Sigmoid colon (tissue), 7 donors: ENCODE measurements at regions of chr13 and their contacts with region 1.

Region 1: GRCh38 chr13:98549728-98550317 is 27.1 kb downstream of the STK24 start:
- DNase-seq: no peak
- H3K4me3 ChIP-seq: no peak overlapping the region
- H3K27ac ChIP-seq: no peak overlapping the region
- H3K4me1 ChIP-seq: peaks cover 0 to 44% (median 37%) of the 10 kb centered on the region in 4 donors
- H3K27me3 ChIP-seq: no peaks in the 10 kb centered on the region
- CTCF ChIP-seq: no peak
- EP300 ChIP-seq: no peak
- POLR2A ChIP-seq: no peak

Region 2: DNA sequence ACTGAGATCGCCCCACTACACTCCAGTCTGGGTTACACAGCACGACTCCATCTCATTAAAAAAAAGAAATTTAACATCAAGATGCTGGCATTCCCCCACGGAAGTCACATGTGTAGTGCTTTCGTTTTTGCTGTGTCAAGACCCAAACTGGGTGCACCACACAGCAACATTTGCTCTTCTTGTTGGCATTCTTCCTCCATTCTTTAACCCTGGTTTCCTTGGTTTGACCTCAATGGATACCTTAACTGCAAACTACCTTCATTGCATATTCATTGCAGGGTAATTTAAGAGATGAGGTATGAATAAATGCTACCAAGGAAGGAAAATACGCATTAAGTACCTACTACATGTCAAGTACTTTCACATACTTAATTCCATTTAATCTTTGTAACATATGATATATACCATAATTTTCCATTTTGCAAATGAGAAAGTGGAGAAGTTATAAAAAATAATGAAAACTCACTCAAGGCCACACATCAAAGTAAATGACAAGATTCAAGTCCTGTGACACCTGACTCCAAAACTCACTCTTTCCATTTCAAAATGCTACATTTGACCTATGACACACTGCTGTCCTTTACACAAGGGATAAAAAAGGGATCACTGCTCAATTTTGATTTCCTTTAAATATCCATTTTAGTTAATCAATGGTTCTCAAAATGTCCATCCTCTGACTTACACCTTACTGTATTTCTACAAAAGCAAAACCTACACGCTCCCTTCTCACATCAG is 32.1 kb before region 1 on chr13:
- intact Hi-C with region 1: loop called (anchors 5 kb)
- DNase-seq: no peak
- H3K4me3 ChIP-seq: no peak overlapping the region
- H3K27ac ChIP-seq: peak overlapping the region in 3 of 4 donors; percentile 35 to 39 (median 37)
- H3K4me1 ChIP-seq: peaks cover 0 to 64% (median 40%) of the 10 kb centered on the region in 4 donors
- H3K27me3 ChIP-seq: no peaks in the 10 kb centered on the region
- CTCF ChIP-seq: no peak
- EP300 ChIP-seq: no peak
- POLR2A ChIP-seq: no peak

Region 3: DNA sequence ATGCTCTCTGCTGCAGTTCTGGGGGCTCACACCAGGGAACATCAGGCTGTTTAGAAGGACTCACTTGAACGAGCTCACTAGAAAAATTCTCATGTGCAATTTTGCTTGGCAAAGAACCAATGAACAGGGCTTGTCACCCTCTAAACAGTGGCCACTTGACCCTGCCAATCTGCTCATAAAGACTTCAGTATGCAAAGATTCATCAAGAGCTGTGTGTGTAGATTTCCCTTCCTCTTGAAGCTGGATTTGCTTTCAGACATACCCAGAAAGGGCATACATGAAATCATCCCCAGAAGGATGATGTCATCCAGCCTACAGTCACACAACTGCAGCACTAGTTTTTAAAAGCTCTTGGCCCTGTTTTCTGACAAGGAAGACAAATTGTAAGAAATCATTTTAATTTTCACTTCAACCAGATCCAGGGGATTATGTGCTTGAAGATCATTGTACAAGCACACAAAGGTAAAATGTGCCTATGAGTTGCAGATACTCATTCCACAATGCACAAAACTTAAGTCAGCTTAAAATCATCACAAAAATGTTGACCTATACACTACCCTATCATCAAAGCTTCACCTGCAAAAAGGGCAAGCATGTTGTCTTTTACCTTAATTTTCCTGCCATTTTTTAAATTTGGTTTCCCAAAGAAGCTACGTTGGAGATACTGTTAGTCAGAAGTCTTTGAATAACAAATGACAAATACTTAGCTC is 32.3 kb after region 1 on chr13:
- intact Hi-C with region 1: no loop called
- DNase-seq: no peak
- H3K4me3 ChIP-seq: no peak overlapping the region
- H3K27ac ChIP-seq: peak overlapping the region in 3 of 4 donors; percentile 12 to 76 (median 55)
- H3K4me1 ChIP-seq: peaks cover 0 to 28% (median 25%) of the 10 kb centered on the region in 4 donors
- H3K27me3 ChIP-seq: no peaks in the 10 kb centered on the region
- CTCF ChIP-seq: no peak
- EP300 ChIP-seq: no peak
- POLR2A ChIP-seq: no peak

Region 4: GRCh38 chr13:99250982-99251825 is 701.4 kb after region 1 on chr13:
- intact Hi-C with region 1: no loop called
- DNase-seq: no peak
- H3K4me3 ChIP-seq: no peak overlapping the region
- H3K27ac ChIP-seq: no peak overlapping the region
- H3K4me1 ChIP-seq: peaks cover 0 to 9% (median 4%) of the 10 kb centered on the region in 4 donors
- H3K27me3 ChIP-seq: no peaks in the 10 kb centered on the region
- CTCF ChIP-seq: no peak
- EP300 ChIP-seq: no peak
- POLR2A ChIP-seq: no peak